B cell (primary cell): ENCODE measurements at regions of chr17 and their contacts with region 1.

Region 1: GRCh38 chr17:8222630-8223356 is 12.4 kb upstream of the AURKB start:
- DNase-seq: peak; percentile 95
- ATAC-seq: peak; percentile 43
- H3K4me3 ChIP-seq: peak overlapping the region; percentile 75 to 100 (median 78)
- H3K4me3 Mint-ChIP-seq: peak overlapping the region; percentile 89
- H3K27ac ChIP-seq: peak overlapping the region; percentile 90 to 93
- H3K27ac Mint-ChIP-seq: peak overlapping the region; percentile 96
- H3K4me1 ChIP-seq: peaks cover 32 to 50% of the 10 kb centered on the region in 2 donors
- H3K4me1 Mint-ChIP-seq: peaks cover 63% of the 10 kb centered on the region
- H3K27me3 ChIP-seq: no peaks in the 10 kb centered on the region
- H3K27me3 Mint-ChIP-seq: no peaks in the 10 kb centered on the region
- CTCF ChIP-seq: no peak

Region 2: GRCh38 chr17:8118769-8119580 is 103.8 kb before region 1 on chr17:
- CTCF ChIA-PET with region 1: interaction called, 38 read pairs
- POLR2A ChIA-PET with region 1: interaction called, 13 read pairs
- intact Hi-C with region 1: loop called (anchors 1 kb)
- DNase-seq: peak; percentile 92
- ATAC-seq: peak; percentile 68
- H3K4me3 ChIP-seq: peak overlapping the region; percentile 61 to 85 (median 69)
- H3K4me3 Mint-ChIP-seq: peak overlapping the region; percentile 94
- H3K27ac ChIP-seq: peak overlapping the region; percentile 13 to 34
- H3K27ac Mint-ChIP-seq: peak overlapping the region; percentile 98
- H3K4me1 ChIP-seq: peaks cover 53 to 61% of the 10 kb centered on the region in 2 donors
- H3K4me1 Mint-ChIP-seq: peaks cover 56% of the 10 kb centered on the region
- H3K27me3 ChIP-seq: peaks cover 0 to 73% (median 49%) of the 10 kb centered on the region in 4 experiments
- H3K27me3 Mint-ChIP-seq: peaks cover 57% of the 10 kb centered on the region
- CTCF ChIP-seq: peak; percentile 92

Region 3: DNA sequence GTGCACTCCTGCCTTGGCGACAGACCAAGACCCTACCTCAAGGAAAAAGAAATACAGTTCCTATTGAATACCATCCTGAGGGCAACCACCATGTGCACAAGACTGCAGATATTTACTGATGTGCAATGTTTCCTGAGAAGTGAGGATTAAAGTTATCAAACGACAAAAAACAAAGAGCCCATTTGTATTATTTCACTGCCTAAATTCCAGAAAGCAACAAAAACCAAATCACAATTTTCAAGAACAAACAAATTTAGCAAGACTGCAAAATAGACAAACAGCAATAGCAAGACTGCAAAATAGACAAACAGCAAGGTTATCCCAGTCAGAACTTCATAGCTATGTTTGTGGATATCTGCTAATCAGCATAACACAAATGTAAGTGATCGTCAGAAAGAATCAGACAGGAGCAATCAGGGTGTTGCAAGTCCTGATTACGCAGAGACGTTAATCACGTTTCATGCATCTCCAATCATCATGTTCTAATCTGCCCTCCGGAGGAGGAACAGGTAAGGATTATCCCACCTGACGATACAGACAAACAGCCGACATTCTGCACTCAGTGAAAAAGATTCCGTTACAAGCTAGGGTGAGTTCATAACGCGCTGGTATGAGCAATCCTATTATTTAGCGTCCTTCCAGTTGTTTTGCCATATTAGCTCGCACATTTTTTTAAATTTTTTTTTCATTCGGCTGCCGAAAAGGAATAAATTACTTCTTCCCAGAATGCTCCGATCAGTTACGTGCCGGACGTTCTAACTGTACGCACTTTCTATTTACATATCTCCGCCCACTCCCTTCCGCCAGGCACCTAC is 49.5 kb before region 1 on chr17:
- CTCF ChIA-PET with region 1: interaction called, 9 read pairs
- POLR2A ChIA-PET with region 1: interaction called, 28 read pairs
- intact Hi-C with region 1: loop called (anchors 1 kb)
- DNase-seq: peak; percentile 95
- ATAC-seq: peak; percentile 83
- H3K4me3 ChIP-seq: peak overlapping the region; percentile 32 to 96 (median 63)
- H3K4me3 Mint-ChIP-seq: peak overlapping the region; percentile 94
- H3K27ac ChIP-seq: peak overlapping the region; percentile 95 to 99
- H3K27ac Mint-ChIP-seq: peak overlapping the region; percentile 100
- H3K4me1 ChIP-seq: peaks cover 24 to 38% of the 10 kb centered on the region in 2 donors
- H3K4me1 Mint-ChIP-seq: peaks cover 46% of the 10 kb centered on the region
- H3K27me3 ChIP-seq: no peaks in the 10 kb centered on the region
- H3K27me3 Mint-ChIP-seq: no peaks in the 10 kb centered on the region
- CTCF ChIP-seq: no peak

Region 4: GRCh38 chr17:8209909-8210760 is 12.7 kb before region 1 on chr17 and contains the start of gene AURKB:
- CTCF ChIA-PET with region 1: interaction called, 21 read pairs
- POLR2A ChIA-PET with region 1: interaction called, 8 read pairs
- intact Hi-C with region 1: loop called (anchors 1 kb)
- DNase-seq: peak; percentile 94
- ATAC-seq: peak; percentile 100
- H3K4me3 ChIP-seq: peak within 1 kb of the TSS; percentile 65 to 95 (median 76)
- H3K4me3 Mint-ChIP-seq: peak within 1 kb of the TSS; percentile 86
- H3K27ac ChIP-seq: peak within 1 kb of the TSS; percentile 59 to 66
- H3K27ac Mint-ChIP-seq: peak within 1 kb of the TSS; percentile 39
- H3K4me1 ChIP-seq: peaks cover 9 to 22% of the 10 kb centered on the region in 2 donors
- H3K4me1 Mint-ChIP-seq: peaks cover 15% of the 10 kb centered on the region
- H3K27me3 ChIP-seq: no peaks in the 10 kb centered on the region
- H3K27me3 Mint-ChIP-seq: no peaks in the 10 kb centered on the region
- CTCF ChIP-seq: no peak
- total RNA-seq, gene AURKB: 0.41 and 1.1 TPM in 2 replicates

Region 5: GRCh38 chr17:8300627-8301242 is 77.9 kb after region 1 on chr17:
- CTCF ChIA-PET with region 1: interaction called, 15 read pairs
- POLR2A ChIA-PET with region 1: interaction called, 9 read pairs
- intact Hi-C with region 1: loop called (anchors 1 kb)
- DNase-seq: peak; percentile 84
- ATAC-seq: peak; percentile 95
- H3K4me3 ChIP-seq: no peak overlapping the region
- H3K4me3 Mint-ChIP-seq: no peak overlapping the region
- H3K27ac ChIP-seq: peak overlapping the region in 1 of 2 donors; percentile 1
- H3K27ac Mint-ChIP-seq: peak overlapping the region; percentile 7
- H3K4me1 ChIP-seq: peaks cover 3 to 4% of the 10 kb centered on the region in 2 donors
- H3K4me1 Mint-ChIP-seq: peaks cover 8% of the 10 kb centered on the region
- H3K27me3 ChIP-seq: no peaks in the 10 kb centered on the region
- H3K27me3 Mint-ChIP-seq: no peaks in the 10 kb centered on the region
- CTCF ChIP-seq: peak; percentile 81

Region 6: DNA sequence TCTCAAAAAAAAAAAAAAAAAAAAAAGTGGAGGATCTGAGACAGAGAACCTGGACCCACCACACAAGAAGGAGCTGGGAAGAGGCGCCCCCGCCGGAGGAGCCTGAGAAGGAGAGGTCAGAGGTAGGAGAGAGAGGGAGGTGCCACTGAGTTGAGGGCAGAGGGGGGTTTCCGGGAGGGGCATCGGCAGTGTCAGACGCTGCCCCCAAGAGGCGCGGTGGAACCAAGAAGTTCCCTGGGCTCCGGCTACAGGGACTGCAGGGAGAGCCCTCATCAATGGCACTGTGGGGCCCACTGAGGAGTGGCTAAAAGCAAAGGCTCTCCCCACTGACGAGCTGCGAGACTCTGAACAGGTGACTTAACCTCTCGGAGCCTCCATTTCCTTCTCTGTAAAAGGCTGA is 517.7 kb after region 1 on chr17:
- CTCF ChIA-PET with region 1: no interaction called
- POLR2A ChIA-PET with region 1: interaction called, 10 read pairs
- intact Hi-C with region 1: no loop called
- DNase-seq: peak; percentile 70
- ATAC-seq: peak; percentile 78
- H3K4me3 ChIP-seq: peak overlapping the region in 4 of 5 experiments; percentile 32 to 66 (median 49)
- H3K4me3 Mint-ChIP-seq: peak overlapping the region; percentile 82
- H3K27ac ChIP-seq: no peak overlapping the region
- H3K27ac Mint-ChIP-seq: peak overlapping the region; percentile 78
- H3K4me1 ChIP-seq: peaks cover 10 to 26% of the 10 kb centered on the region in 2 donors
- H3K4me1 Mint-ChIP-seq: peaks cover 23% of the 10 kb centered on the region
- H3K27me3 ChIP-seq: peaks cover 0 to 2% (median 0%) of the 10 kb centered on the region in 4 experiments
- H3K27me3 Mint-ChIP-seq: no peaks in the 10 kb centered on the region
- CTCF ChIP-seq: no peak